Naive thymus-derived CD4-positive, alpha-beta T cell (primary cell): ENCODE measurements at regions of chrX and their contacts with region 1.

Region 1: GRCh38 chrX:12771445-12772069 is 19.7 kb upstream of the PRPS2 start:
- DNase-seq: peak; percentile 46 to 72 (median 63)
- ATAC-seq: peak; percentile 100
- H3K4me3 ChIP-seq: no peak overlapping the region
- H3K4me3 Mint-ChIP-seq: peak overlapping the region in 6 of 10 donors; percentile 14 to 50 (median 36)
- H3K27ac ChIP-seq: no peak overlapping the region
- H3K27ac Mint-ChIP-seq: no peak overlapping the region
- H3K4me1 ChIP-seq: no peaks in the 10 kb centered on the region
- H3K4me1 Mint-ChIP-seq: peaks cover 0 to 13% (median 8%) of the 10 kb centered on the region in 7 donors
- H3K27me3 ChIP-seq: no peaks in the 10 kb centered on the region
- H3K27me3 Mint-ChIP-seq: peaks cover 0 to 32% (median 4%) of the 10 kb centered on the region in 5 donors

Region 2: DNA sequence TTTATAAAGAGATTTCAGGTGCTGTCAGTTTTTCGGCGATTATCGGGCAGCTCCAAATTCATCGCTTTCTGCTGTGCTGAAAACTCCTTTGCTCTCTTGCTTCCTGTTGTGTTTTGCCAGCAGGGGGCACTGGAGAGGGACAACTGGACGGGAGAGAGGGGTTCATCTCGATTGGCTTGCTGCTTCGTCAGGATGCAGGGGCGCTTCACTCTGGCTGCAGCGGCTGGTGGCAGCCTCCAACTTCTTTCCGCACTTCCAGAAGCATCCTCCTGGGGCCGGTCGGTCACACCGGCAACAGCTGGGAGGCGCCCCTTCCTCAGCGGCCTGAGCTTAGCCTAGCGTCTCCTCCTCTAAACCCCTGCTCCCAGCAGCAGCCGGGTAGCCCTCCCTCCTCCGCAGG is 984.0 kb before region 1 on chrX:
- CTCF ChIA-PET with region 1: no interaction called
- POLR2A ChIA-PET with region 1: no interaction called
- intact Hi-C with region 1: loop called in 1 of 2 experiments (anchors 5 kb)
- DNase-seq: peak in 8 of 9 donors; percentile 39 to 70 (median 63)
- ATAC-seq: peak; percentile 79
- H3K4me3 ChIP-seq: peak overlapping the region; percentile 35
- H3K4me3 Mint-ChIP-seq: peak overlapping the region; percentile 53 to 86 (median 75)
- H3K27ac ChIP-seq: peak overlapping the region; percentile 17
- H3K27ac Mint-ChIP-seq: peak overlapping the region in 6 of 9 donors; percentile 25 to 70 (median 45)
- H3K4me1 ChIP-seq: peaks cover 3 to 16% of the 10 kb centered on the region in 2 donors
- H3K4me1 Mint-ChIP-seq: peaks cover under 1 to 44% (median 32%) of the 10 kb centered on the region in 7 donors
- H3K27me3 ChIP-seq: no peaks in the 10 kb centered on the region
- H3K27me3 Mint-ChIP-seq: no peaks in the 10 kb centered on the region

Region 3: GRCh38 chrX:12497832-12498591 is 273.5 kb before region 1 on chrX:
- CTCF ChIA-PET with region 1: no interaction called
- POLR2A ChIA-PET with region 1: no interaction called
- intact Hi-C with region 1: no loop called
- DNase-seq: no peak
- ATAC-seq: no peak
- H3K4me3 ChIP-seq: no peak overlapping the region
- H3K4me3 Mint-ChIP-seq: no peak overlapping the region
- H3K27ac ChIP-seq: no peak overlapping the region
- H3K27ac Mint-ChIP-seq: no peak overlapping the region
- H3K4me1 ChIP-seq: no peaks in the 10 kb centered on the region
- H3K4me1 Mint-ChIP-seq: no peaks in the 10 kb centered on the region
- H3K27me3 ChIP-seq: no peaks in the 10 kb centered on the region
- H3K27me3 Mint-ChIP-seq: no peaks in the 10 kb centered on the region

Region 4: DNA sequence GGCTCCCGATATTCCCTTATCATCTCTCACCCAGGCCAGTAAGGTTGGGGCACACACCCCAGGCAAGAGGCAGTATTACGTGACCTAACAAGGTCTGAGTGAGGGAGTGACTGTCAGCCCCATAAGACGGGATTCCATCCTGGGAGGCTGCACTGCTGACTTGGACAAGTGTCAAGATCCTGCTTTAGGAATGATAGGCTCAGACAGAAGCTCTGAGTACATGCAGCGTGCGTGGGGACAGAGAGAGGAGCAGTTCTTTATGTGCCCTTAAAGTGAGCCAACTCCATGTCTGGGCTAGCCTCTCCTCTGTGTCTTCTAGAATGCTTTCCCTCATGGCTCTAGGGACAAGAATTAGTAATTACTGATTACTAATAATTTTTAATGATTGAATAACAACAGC is 122.6 kb before region 1 on chrX:
- CTCF ChIA-PET with region 1: no interaction called
- POLR2A ChIA-PET with region 1: no interaction called
- intact Hi-C with region 1: no loop called
- DNase-seq: no peak
- ATAC-seq: no peak
- H3K4me3 ChIP-seq: no peak overlapping the region
- H3K4me3 Mint-ChIP-seq: no peak overlapping the region
- H3K27ac ChIP-seq: no peak overlapping the region
- H3K27ac Mint-ChIP-seq: no peak overlapping the region
- H3K4me1 ChIP-seq: no peaks in the 10 kb centered on the region
- H3K4me1 Mint-ChIP-seq: no peaks in the 10 kb centered on the region
- H3K27me3 ChIP-seq: no peaks in the 10 kb centered on the region
- H3K27me3 Mint-ChIP-seq: peaks cover 0 to 19% (median 0%) of the 10 kb centered on the region in 5 donors

Region 5: GRCh38 chrX:12701628-12702027 is 69.9 kb before region 1 on chrX:
- CTCF ChIA-PET with region 1: no interaction called
- POLR2A ChIA-PET with region 1: no interaction called
- intact Hi-C with region 1: loop called in 1 of 2 experiments (anchors 2 kb)
- DNase-seq: peak in 2 of 9 donors; percentile 5 to 21
- ATAC-seq: no peak
- H3K4me3 ChIP-seq: no peak overlapping the region
- H3K4me3 Mint-ChIP-seq: no peak overlapping the region
- H3K27ac ChIP-seq: no peak overlapping the region
- H3K27ac Mint-ChIP-seq: peak overlapping the region in 1 of 9 donors; percentile 60
- H3K4me1 ChIP-seq: no peaks in the 10 kb centered on the region
- H3K4me1 Mint-ChIP-seq: peaks cover 0 to 4% (median 0%) of the 10 kb centered on the region in 7 donors
- H3K27me3 ChIP-seq: no peaks in the 10 kb centered on the region
- H3K27me3 Mint-ChIP-seq: peaks cover 5 to 14% (median 9%) of the 10 kb centered on the region in 5 donors

Region 6: GRCh38 chrX:12791257-12792228 is 20.0 kb after region 1 on chrX and contains the start of gene PRPS2:
- CTCF ChIA-PET with region 1: interaction called, 4 read pairs
- POLR2A ChIA-PET with region 1: no interaction called
- intact Hi-C with region 1: loop called in 1 of 2 experiments (anchors 2 kb)
- DNase-seq: peak; percentile 39 to 74 (median 69)
- ATAC-seq: peak; percentile 96
- H3K4me3 ChIP-seq: peak within 1 kb of the TSS; percentile 74
- H3K4me3 Mint-ChIP-seq: peak within 1 kb of the TSS; percentile 85 to 92 (median 88)
- H3K27ac ChIP-seq: peak within 1 kb of the TSS; percentile 73
- H3K27ac Mint-ChIP-seq: peak within 1 kb of the TSS; percentile 59 to 86 (median 81)
- H3K4me1 ChIP-seq: peaks cover 0 to 6% of the 10 kb centered on the region in 2 donors
- H3K4me1 Mint-ChIP-seq: peaks cover 8 to 44% (median 34%) of the 10 kb centered on the region in 7 donors
- H3K27me3 ChIP-seq: no peaks in the 10 kb centered on the region
- H3K27me3 Mint-ChIP-seq: peaks cover 0 to 16% (median 0%) of the 10 kb centered on the region in 5 donors
- total RNA-seq, gene PRPS2: 24.7 to 95.8 (median 32.0) TPM

Region 7: GRCh38 chrX:12894074-12895030 is 122.8 kb after region 1 on chrX:
- CTCF ChIA-PET with region 1: no interaction called
- POLR2A ChIA-PET with region 1: no interaction called
- intact Hi-C with region 1: loop called in 1 of 2 experiments (anchors 2 kb)
- DNase-seq: peak; percentile 10 to 56 (median 35)
- ATAC-seq: peak; percentile 67
- H3K4me3 ChIP-seq: no peak overlapping the region
- H3K4me3 Mint-ChIP-seq: peak overlapping the region in 2 of 10 donors; percentile 44 to 51
- H3K27ac ChIP-seq: no peak overlapping the region
- H3K27ac Mint-ChIP-seq: peak overlapping the region in 5 of 9 donors; percentile 5 to 82 (median 77)
- H3K4me1 ChIP-seq: peaks cover 0 to 13% of the 10 kb centered on the region in 2 donors
- H3K4me1 Mint-ChIP-seq: peaks cover 4 to 56% (median 20%) of the 10 kb centered on the region in 7 donors
- H3K27me3 ChIP-seq: no peaks in the 10 kb centered on the region
- H3K27me3 Mint-ChIP-seq: no peaks in the 10 kb centered on the region

Region 8: DNA sequence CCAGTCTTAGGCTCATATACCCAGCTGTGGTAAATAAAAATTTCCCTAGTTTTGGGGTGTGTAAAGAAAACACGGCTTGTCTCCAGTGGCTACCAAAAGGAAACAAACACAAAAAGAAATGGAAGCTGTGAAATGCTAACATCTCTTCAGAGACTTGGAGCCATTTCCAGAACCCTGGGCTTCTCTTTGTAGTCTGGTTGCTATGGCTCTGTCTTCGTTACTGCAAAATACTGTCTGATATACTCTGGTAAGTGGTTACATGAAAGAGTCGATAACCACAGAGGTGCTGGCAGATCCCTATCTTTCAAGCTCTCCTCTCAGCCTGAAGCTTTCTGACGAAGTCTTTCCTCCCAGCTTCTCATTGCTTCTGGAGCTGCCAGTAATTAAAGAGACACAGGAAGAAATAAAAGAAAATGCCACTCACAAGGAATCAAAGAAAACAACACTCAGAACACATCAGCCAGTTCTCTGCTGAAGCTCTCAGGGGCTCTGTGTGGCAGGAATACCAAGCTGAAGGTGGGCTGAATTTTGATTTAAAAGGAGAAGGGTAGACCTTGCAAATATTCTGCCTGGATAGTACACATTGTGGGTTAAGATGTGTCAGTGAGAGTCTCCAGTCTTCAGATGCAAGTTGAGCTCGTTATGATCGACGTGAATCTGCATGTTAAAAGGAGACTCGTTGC is 380.4 kb after region 1 on chrX:
- CTCF ChIA-PET with region 1: no interaction called
- POLR2A ChIA-PET with region 1: no interaction called
- intact Hi-C with region 1: loop called in 1 of 2 experiments (anchors 5 kb)
- DNase-seq: peak in 7 of 9 donors; percentile 51 to 82 (median 80)
- ATAC-seq: peak; percentile 96
- H3K4me3 ChIP-seq: no peak overlapping the region
- H3K4me3 Mint-ChIP-seq: peak overlapping the region; percentile 46 to 77 (median 68)
- H3K27ac ChIP-seq: peak overlapping the region; percentile 55
- H3K27ac Mint-ChIP-seq: peak overlapping the region; percentile 78 to 94 (median 85)
- H3K4me1 ChIP-seq: peaks cover 7 to 8% of the 10 kb centered on the region in 2 donors
- H3K4me1 Mint-ChIP-seq: peaks cover 0 to 31% (median 18%) of the 10 kb centered on the region in 7 donors
- H3K27me3 ChIP-seq: no peaks in the 10 kb centered on the region
- H3K27me3 Mint-ChIP-seq: no peaks in the 10 kb centered on the region

Region 9: DNA sequence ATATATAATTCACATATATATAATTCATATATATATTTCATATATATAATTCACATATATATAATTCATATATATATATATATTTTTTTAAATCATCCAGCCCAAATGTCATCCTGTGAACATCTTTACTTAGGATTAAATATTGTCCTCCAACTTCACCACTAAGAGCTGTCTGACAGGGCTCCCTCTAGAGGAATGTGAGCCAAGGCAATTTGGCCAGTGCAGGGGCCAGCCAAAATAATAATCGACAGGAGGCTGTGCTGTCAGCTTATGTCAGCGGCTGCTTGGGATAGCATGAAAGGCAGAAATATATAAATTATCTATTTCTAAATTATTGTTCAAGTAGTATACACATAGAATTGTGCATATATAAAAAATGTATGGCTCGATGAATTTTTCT is 827.3 kb after region 1 on chrX:
- CTCF ChIA-PET with region 1: no interaction called
- POLR2A ChIA-PET with region 1: no interaction called
- intact Hi-C with region 1: no loop called
- DNase-seq: no peak
- ATAC-seq: no peak
- H3K4me3 ChIP-seq: no peak overlapping the region
- H3K4me3 Mint-ChIP-seq: no peak overlapping the region
- H3K27ac ChIP-seq: no peak overlapping the region
- H3K27ac Mint-ChIP-seq: no peak overlapping the region
- H3K4me1 ChIP-seq: no peaks in the 10 kb centered on the region
- H3K4me1 Mint-ChIP-seq: no peaks in the 10 kb centered on the region
- H3K27me3 ChIP-seq: no peaks in the 10 kb centered on the region
- H3K27me3 Mint-ChIP-seq: peaks cover 0 to 4% (median 2%) of the 10 kb centered on the region in 5 donors